ENCODE measurements at regions of chrX and their contacts with region 1.

Region 1: DNA sequence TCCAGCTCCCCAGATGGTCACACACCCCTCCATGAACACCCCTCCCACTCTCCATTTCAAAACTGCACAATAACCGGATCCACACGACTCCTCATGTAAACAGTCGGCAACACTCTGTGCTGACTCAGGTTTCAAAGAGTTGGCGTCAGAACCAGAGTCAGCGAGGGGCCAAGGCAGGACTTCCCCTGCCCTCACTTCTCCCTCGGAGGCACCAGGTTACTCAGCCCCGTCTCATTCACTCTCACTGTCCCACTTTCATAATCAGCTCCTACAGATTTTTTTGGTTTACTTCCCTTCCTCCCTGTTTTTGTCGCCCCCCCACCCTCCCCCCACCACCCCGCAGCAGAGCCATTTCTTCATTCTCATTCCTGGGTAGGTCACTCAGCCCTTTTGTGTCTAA is 2.7 kb upstream of the TIMP1 start:
- DNase-seq: no peak
- H3K4me3 ChIP-seq: no peak overlapping the region
- H3K27ac ChIP-seq: no peak overlapping the region
- H3K4me1 ChIP-seq: peaks cover 3% of the 10 kb centered on the region
- H3K27me3 ChIP-seq: no peaks in the 10 kb centered on the region
- CTCF ChIP-seq: no peak

Region 2: DNA sequence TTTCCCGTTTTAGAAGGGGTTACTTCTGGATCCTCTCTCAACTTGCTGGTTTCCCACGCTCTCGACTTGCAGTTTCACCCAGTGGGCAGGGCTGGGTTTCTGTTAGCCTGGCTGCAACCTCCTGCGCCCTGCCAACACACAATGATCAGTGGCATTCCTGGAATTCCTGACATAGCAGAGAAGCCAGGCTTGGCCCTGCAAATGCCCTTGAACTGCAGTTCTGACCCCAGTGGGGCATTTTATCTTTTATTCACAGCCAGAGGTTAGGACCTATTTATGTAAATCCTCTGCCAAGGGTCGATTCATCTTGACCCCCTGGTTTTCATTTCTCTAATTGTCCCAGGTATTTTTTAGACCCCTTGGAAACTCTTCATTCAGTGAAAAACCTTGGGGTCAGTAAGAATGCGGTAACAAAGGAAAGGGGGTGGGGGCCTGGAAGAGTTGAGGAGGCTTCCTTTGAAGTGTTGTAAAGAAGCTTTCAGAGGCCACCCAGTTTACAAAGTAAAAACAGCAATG is 1251.9 kb before region 1 on chrX:
- CTCF ChIA-PET with region 1: no interaction called
- POLR2A ChIA-PET with region 1: no interaction called
- intact Hi-C with region 1: no loop called
- DNase-seq: peak; percentile 56
- H3K4me3 ChIP-seq: no peak overlapping the region
- H3K27ac ChIP-seq: peak overlapping the region; percentile 96
- H3K4me1 ChIP-seq: peaks cover 55% of the 10 kb centered on the region
- H3K27me3 ChIP-seq: no peaks in the 10 kb centered on the region
- CTCF ChIP-seq: no peak

Region 3: GRCh38 chrX:46836701-46837557 is 742.6 kb before region 1 on chrX and contains the start of gene RP2:
- CTCF ChIA-PET with region 1: no interaction called
- POLR2A ChIA-PET with region 1: no interaction called
- intact Hi-C with region 1: no loop called
- DNase-seq: peak; percentile 96
- H3K4me3 ChIP-seq: peak within 1 kb of the TSS; percentile 87
- H3K27ac ChIP-seq: peak within 1 kb of the TSS; percentile 82
- H3K4me1 ChIP-seq: no peaks in the 10 kb centered on the region
- H3K27me3 ChIP-seq: no peaks in the 10 kb centered on the region
- CTCF ChIP-seq: no peak
- total RNA-seq, gene RP2: 21.5 and 24.7 TPM in 2 replicates

Region 4: DNA sequence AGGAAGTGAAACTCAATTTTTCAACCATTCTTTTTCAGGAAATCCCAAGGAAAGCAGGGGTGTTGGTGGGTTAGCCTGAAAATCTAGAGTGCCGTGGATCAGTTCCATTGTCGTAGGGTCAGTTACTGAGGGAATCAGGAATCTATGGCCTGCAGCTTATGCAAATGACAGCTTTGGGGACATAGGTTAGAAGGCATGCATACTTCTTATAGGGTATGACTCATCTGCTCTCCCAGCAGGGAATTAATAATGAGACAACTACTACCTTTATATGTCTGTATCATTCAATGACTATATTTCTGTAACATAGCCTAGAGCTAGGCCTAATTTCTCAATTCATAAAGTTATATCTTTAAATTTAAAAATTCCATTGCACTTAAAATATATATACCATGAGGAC is 133.1 kb before region 1 on chrX:
- CTCF ChIA-PET with region 1: no interaction called
- POLR2A ChIA-PET with region 1: no interaction called
- intact Hi-C with region 1: no loop called
- DNase-seq: no peak
- H3K4me3 ChIP-seq: no peak overlapping the region
- H3K27ac ChIP-seq: no peak overlapping the region
- H3K4me1 ChIP-seq: no peaks in the 10 kb centered on the region
- H3K27me3 ChIP-seq: no peaks in the 10 kb centered on the region
- CTCF ChIP-seq: no peak

Region 5: DNA sequence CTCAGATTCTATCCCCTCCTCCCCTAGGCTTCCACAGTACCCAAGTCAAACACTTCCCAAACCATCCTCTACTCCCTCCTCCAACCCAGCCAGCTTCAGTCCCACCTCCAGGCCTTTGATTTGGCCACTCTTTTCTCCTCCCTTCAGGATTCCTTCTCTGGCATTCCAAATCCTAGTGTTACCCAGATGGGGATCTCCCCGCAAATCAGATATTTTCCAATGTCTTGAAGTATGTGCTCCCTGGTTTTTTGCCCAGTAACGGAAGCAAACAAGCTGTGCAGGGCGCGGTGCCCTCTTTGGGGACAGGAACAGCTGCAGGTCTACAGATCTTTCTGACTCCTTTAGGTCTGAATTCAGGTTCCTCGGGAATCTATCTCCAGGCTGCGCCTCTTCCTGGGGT is 42.3 kb after region 1 on chrX:
- CTCF ChIA-PET with region 1: no interaction called
- POLR2A ChIA-PET with region 1: no interaction called
- intact Hi-C with region 1: no loop called
- DNase-seq: no peak
- H3K4me3 ChIP-seq: no peak overlapping the region
- H3K27ac ChIP-seq: no peak overlapping the region
- H3K4me1 ChIP-seq: no peaks in the 10 kb centered on the region
- H3K27me3 ChIP-seq: no peaks in the 10 kb centered on the region
- CTCF ChIP-seq: no peak

Region 6: DNA sequence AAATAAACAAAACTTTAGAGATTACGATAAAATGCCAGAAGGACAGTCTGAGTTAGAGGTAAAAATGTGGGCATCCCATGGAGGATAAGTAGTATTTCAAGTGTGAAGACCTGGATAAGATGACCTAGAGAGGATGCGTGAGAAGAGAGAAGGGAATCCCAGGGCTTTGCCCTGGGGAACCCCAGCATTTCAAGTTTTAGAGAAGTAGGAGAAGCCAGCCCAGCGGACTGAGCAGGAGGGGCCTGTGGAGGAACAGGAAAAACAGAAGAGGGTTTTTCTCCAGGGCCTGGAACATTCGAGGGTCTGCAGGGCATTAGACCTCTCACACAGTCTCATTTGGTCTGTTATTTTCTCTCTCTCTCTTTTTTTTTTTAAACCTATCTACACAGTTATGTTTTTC is 53.1 kb after region 1 on chrX:
- CTCF ChIA-PET with region 1: no interaction called
- POLR2A ChIA-PET with region 1: interaction called, 10 read pairs
- intact Hi-C with region 1: no loop called
- DNase-seq: no peak
- H3K4me3 ChIP-seq: no peak overlapping the region
- H3K27ac ChIP-seq: no peak overlapping the region
- H3K4me1 ChIP-seq: no peaks in the 10 kb centered on the region
- H3K27me3 ChIP-seq: no peaks in the 10 kb centered on the region
- CTCF ChIP-seq: no peak